ENCODE measurements at regions of chr17 and their contacts with region 1.

Region 1: GRCh38 chr17:59521204-59522126 is 43.9 kb upstream of the DHX40 start:
- DNase-seq: peak; percentile 92
- H3K4me3 ChIP-seq: 0 out of 4 replicates have a peak overlapping the region, but pooled peaks of 1 of the 2 experiments have one; percentile 7
- H3K27ac ChIP-seq: peak overlapping the region in 1 of 2 experiments; percentile 70; a peak in 2 of 4 replicates
- H3K4me1 ChIP-seq: peaks cover 0 to 3% of the 10 kb centered on the region in 2 experiments; a peak in 2 of 4 replicates
- H3K27me3 ChIP-seq: no peaks in the 10 kb centered on the region
- CTCF ChIP-seq: peak; percentile 98
- EP300 ChIP-seq: peak in 1 of 2 experiments; percentile 49; a peak in 1 of 4 replicates
- RAD21 ChIP-seq: peak; percentile 98

Region 2: DNA sequence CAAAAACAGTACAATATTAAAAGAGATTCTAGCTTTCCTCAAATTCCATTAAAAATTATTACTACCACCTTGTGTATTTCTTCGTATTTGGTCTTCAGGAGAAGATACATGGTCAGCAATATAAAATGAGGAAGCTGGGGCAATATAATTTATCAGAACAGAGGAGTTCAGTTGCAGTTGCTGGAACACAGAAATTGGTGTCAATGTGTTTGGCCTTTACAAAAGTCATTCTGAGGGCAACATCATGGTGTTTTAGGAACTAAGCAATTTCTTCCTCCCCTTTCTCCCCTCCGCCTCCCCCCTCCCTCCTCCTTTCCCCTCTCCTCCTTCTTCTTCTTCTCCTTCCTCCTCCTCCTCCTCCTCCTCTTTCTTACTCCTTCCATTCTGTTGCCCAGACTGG is 87.9 kb before region 1 on chr17:
- CTCF ChIA-PET with region 1: no interaction called
- POLR2A ChIA-PET with region 1: no interaction called
- DNase-seq: no peak
- H3K4me3 ChIP-seq: no peak overlapping the region
- H3K27ac ChIP-seq: no peak overlapping the region
- H3K4me1 ChIP-seq: peaks cover 2 to 4% of the 10 kb centered on the region in 2 experiments; a peak in 2 of 4 replicates
- H3K27me3 ChIP-seq: no peaks in the 10 kb centered on the region
- CTCF ChIP-seq: no peak
- EP300 ChIP-seq: no peak
- RAD21 ChIP-seq: no peak

Region 3: GRCh38 chr17:59506894-59507726 is 14.4 kb before region 1 on chr17:
- CTCF ChIA-PET with region 1: interaction called, 37 read pairs
- POLR2A ChIA-PET with region 1: interaction called, 3 read pairs
- DNase-seq: no peak
- H3K4me3 ChIP-seq: no peak overlapping the region
- H3K27ac ChIP-seq: 0 out of 4 replicates have a peak overlapping the region, but pooled peaks of 1 of the 2 experiments have one; percentile 2
- H3K4me1 ChIP-seq: no peaks in the 10 kb centered on the region; a peak in 1 of 4 replicates
- H3K27me3 ChIP-seq: no peaks in the 10 kb centered on the region
- CTCF ChIP-seq: no peak
- EP300 ChIP-seq: no peak
- RAD21 ChIP-seq: no peak

Region 4: DNA sequence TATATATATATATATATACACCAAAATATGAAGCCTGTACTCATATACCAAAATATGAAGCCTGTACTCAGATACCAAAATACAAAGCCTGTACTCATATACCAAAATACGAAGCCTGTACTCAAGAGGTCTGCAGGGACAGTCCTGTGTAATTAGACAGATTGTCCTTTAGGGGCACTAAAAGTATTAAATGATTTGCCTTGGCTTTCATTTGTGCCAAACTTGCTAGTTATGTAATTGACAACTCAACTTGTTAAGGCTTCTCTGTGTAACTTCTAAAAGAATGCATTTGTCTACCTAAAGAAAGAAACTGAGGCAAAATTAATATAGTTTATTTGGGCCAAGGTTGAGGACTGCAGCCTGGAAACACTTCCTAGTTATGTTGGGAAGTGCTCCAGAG is 13.1 kb after region 1 on chr17:
- CTCF ChIA-PET with region 1: interaction called, 38 read pairs
- POLR2A ChIA-PET with region 1: interaction called, 3 read pairs
- DNase-seq: peak; percentile 58
- H3K4me3 ChIP-seq: no peak overlapping the region
- H3K27ac ChIP-seq: no peak overlapping the region
- H3K4me1 ChIP-seq: no peaks in the 10 kb centered on the region
- H3K27me3 ChIP-seq: peaks cover 6% of the 10 kb centered on the region; the same call in 1 of the 2 replicates
- CTCF ChIP-seq: peak; percentile 39; the same call in 1 of the 2 replicates
- EP300 ChIP-seq: no peak
- RAD21 ChIP-seq: peak; percentile 46; the same call in 1 of the 2 replicates

Region 5: DNA sequence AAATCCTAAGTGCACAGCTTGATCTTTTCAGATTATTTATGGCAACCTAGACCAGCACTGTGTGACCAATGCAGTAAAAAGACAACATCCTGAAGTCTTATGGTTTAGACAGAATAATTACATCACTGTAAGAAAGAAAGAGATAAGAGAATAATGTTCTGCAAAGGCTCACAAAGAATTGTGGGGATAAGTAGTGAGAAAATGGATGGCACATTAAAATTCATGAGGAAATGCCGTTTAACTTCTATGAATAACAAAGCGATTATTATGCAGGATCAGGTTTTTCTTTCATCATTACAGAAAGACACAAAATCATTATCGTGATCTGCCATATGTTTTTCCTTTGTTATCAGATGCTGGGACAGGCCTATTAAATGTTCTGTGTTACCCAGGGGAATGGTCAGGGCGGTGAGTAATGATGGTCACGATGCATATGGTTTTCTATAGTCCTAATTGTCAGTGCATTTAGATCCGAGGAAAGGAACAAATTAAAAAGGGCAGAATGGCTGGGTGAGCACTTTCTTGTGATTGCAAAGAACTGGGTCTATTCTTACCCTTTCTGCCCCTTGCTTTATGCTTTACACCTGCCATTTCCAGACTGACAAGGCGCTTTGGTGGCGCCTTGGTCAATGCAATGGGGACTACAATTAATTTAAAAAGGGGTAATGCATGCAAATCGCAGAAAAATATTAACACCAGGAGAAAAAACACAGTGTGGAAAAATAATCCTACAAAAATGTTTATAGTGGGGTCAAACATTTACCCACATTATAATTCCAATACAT is 25.9 kb after region 1 on chr17:
- CTCF ChIA-PET with region 1: interaction called, 20 read pairs
- POLR2A ChIA-PET with region 1: no interaction called
- DNase-seq: peak; percentile 87
- H3K4me3 ChIP-seq: no peak overlapping the region
- H3K27ac ChIP-seq: peak overlapping the region; percentile 31 to 93; a peak in 3 of 4 replicates
- H3K4me1 ChIP-seq: peaks cover 9 to 11% of the 10 kb centered on the region in 2 experiments
- H3K27me3 ChIP-seq: no peaks in the 10 kb centered on the region
- CTCF ChIP-seq: no peak
- EP300 ChIP-seq: peak in 1 of 2 experiments; percentile 94; a peak in 2 of 4 replicates
- RAD21 ChIP-seq: peak; percentile 14; the same call in 1 of the 2 replicates

Region 6: DNA sequence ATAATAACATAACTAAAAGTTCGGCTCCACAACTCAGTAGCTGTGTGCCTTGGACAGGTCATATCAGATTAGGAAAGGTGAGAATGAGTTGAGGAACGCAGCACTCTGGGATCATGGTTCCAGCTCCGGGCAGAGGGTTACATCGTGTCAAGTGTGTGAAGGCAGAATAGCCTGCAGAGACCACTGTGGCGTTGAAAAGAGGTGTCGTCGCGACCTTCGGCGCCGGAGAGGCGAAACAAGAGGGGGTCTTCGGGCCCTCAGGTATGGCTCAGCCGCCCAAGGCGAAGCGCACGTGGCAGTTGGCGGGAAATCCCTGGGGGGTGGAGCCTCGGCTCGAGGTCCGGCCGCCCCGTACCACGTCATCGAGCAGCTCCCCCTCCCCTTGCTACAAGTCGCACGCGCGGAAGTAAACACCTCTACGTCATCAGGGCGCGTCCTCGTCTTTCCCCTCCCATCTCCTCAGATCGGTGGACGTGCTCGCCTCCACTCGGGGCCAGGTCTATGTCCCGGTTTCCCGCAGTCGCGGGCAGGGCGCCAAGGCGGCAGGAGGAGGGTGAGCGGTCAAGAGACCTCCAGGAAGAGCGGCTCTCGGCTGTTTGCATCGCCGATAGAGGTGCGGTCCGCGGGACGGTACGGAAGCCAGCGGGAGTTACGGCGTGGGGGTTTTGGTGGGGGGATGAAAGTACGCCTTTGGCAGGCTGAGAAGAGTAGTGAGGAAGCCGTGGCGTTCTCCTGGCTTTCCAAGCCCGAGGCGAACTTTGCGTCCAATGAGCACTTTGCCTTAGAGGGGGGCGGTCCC is 43.9 kb after region 1 on chr17 and contains the start of gene DHX40:
- CTCF ChIA-PET with region 1: interaction called, 105 read pairs
- POLR2A ChIA-PET with region 1: interaction called, 3 read pairs
- DNase-seq: peak; percentile 99
- H3K4me3 ChIP-seq: peak within 1 kb of the TSS; percentile 91 to 99
- H3K27ac ChIP-seq: peak within 1 kb of the TSS; percentile 83 to 89
- H3K4me1 ChIP-seq: peaks cover 0 to 10% of the 10 kb centered on the region in 2 experiments; a peak in 3 of 4 replicates
- H3K27me3 ChIP-seq: no peaks in the 10 kb centered on the region
- CTCF ChIP-seq: no peak
- EP300 ChIP-seq: no peak
- RAD21 ChIP-seq: no peak
- polyA plus RNA-seq, gene DHX40: 33.8 and 45.5 TPM in 2 replicates

Region 7: GRCh38 chr17:59643228-59644140 is 122.0 kb after region 1 on chr17:
- CTCF ChIA-PET with region 1: interaction called, 10 read pairs
- POLR2A ChIA-PET with region 1: no interaction called
- DNase-seq: no peak
- H3K4me3 ChIP-seq: no peak overlapping the region
- H3K27ac ChIP-seq: no peak overlapping the region; a peak in 1 of 4 replicates
- H3K4me1 ChIP-seq: peaks cover 2 to 15% of the 10 kb centered on the region in 2 experiments; a peak in 3 of 4 replicates
- H3K27me3 ChIP-seq: no peaks in the 10 kb centered on the region
- CTCF ChIP-seq: no peak
- EP300 ChIP-seq: no peak
- RAD21 ChIP-seq: no peak